Mammary epithelial cell (primary cell): ENCODE measurements at regions of chr16 and their contacts with region 1.

Region 1: DNA sequence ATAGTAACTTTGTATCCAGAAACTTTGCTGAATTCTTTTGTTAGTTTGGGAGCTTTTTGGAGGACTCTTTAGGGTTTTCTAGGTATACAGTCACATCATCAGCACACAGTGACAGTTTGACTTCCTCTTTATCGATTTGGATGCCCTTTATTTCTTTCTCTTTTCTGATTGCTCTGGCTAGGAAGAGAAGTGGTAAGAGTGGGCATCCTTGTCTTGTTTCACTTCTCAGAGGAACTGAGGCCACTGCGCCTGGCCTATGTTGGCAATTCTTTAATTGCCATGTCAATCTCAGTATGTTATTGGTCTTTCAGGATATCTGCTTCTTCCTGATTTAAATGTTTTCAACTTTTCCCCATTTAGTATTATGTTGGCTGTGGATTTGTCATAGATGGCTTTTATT is 24.6 kb downstream of the ATF7IP2 start:
- DNase-seq: no peak
- H3K4me3 ChIP-seq: no peak overlapping the region
- H3K27ac ChIP-seq: no peak overlapping the region
- H3K4me1 ChIP-seq: no peaks in the 10 kb centered on the region
- H3K27me3 ChIP-seq: no peaks in the 10 kb centered on the region
- CTCF ChIP-seq: no peak

Region 2: GRCh38 chr16:10485698-10486382 is 75.4 kb after region 1 on chr16:
- CTCF ChIA-PET with region 1: no interaction called
- dilution Hi-C with region 1: loop called (anchors 5 kb)
- in situ Hi-C with region 1: no loop called
- intact Hi-C with region 1: no loop called
- DNase-seq: peak; percentile 40
- H3K4me3 ChIP-seq: no peak overlapping the region
- H3K27ac ChIP-seq: no peak overlapping the region
- H3K4me1 ChIP-seq: no peaks in the 10 kb centered on the region
- H3K27me3 ChIP-seq: no peaks in the 10 kb centered on the region
- CTCF ChIP-seq: no peak

Region 3: GRCh38 chr16:10539244-10539643 is 128.8 kb after region 1 on chr16:
- CTCF ChIA-PET with region 1: no interaction called
- dilution Hi-C with region 1: no loop called
- in situ Hi-C with region 1: no loop called
- intact Hi-C with region 1: no loop called
- DNase-seq: no peak
- H3K4me3 ChIP-seq: no peak overlapping the region
- H3K27ac ChIP-seq: no peak overlapping the region
- H3K4me1 ChIP-seq: peaks cover 11% of the 10 kb centered on the region
- H3K27me3 ChIP-seq: no peaks in the 10 kb centered on the region
- CTCF ChIP-seq: no peak